Prostate gland (tissue), 2 donors: ENCODE measurements at regions of chr16 and their contacts with region 1.

Region 1: GRCh38 chr16:89700100-89700648 is 1.3 kb downstream of the SPATA2L start:
- DNase-seq: peak; percentile 100
- H3K4me3 ChIP-seq: peak overlapping the region; percentile 60 to 66
- H3K27ac ChIP-seq: peak overlapping the region; percentile 92 to 97
- H3K4me1 ChIP-seq: peaks cover 6% of the 10 kb centered on the region
- H3K27me3 ChIP-seq: no peaks in the 10 kb centered on the region
- CTCF ChIP-seq: peak; percentile 71 to 99 (median 90)
- POLR2A ChIP-seq: peak; percentile 81

Region 2: GRCh38 chr16:88811769-88812512 is 888.2 kb before region 1 on chr16 and contains the start of gene APRT:
- intact Hi-C with region 1: loop called (anchors 5 kb)
- DNase-seq: peak; percentile 90
- H3K4me3 ChIP-seq: peak within 1 kb of the TSS; percentile 60 to 62
- H3K27ac ChIP-seq: peak within 1 kb of the TSS; percentile 83 to 84
- H3K4me1 ChIP-seq: peaks cover 10% of the 10 kb centered on the region
- H3K27me3 ChIP-seq: no peaks in the 10 kb centered on the region
- CTCF ChIP-seq: peak in 3 of 4 experiments; percentile 23 to 62 (median 54)
- POLR2A ChIP-seq: peak; percentile 63
- total RNA-seq, gene APRT: 165 to 211 TPM

Region 3: DNA sequence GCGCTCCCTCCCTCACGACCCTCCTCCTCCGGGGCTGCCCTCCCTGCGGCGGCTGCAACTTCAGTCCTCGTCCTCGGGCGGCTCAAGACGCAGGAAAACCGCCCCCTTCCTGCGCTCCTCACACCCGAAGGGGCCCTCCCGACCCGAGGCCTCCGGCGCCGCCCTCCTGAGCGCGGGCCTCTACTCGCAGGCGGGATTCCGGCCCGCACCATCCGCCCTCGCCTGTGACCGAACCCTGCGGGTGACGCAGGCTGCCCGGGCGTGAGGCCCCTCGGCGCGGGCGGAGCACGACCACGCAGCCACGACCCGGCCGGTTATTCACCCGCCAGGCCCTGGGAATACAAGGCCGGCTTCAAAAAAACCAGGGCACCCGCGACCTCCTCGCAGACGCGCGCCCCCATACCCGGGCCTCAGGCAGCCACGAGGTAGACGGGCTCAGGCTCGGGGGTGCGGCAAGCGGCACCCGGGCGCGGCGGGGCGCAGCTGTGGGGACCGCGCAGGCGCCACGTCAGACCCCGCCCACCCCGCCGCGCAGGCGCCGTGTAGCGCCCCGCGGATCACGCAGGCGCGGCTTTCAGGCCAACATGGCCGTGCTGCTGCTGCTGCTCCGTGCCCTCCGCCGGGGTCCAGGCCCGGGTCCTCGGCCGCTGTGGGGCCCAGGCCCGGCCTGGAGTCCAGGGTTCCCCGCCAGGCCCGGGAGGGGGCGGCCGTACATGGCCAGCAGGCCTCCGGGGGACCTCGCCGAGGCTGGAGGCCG is 192.2 kb before region 1 on chr16 and contains the start of gene SPG7:
- intact Hi-C with region 1: no loop called
- DNase-seq: peak; percentile 77
- H3K4me3 ChIP-seq: peak within 1 kb of the TSS; percentile 85 to 98
- H3K27ac ChIP-seq: peak within 1 kb of the TSS; percentile 86 to 88
- H3K4me1 ChIP-seq: peaks cover 6% of the 10 kb centered on the region
- H3K27me3 ChIP-seq: no peaks in the 10 kb centered on the region
- CTCF ChIP-seq: peak in 1 of 4 experiments; percentile 20
- POLR2A ChIP-seq: peak; percentile 95
- total RNA-seq, gene SPG7: 128 to 165 TPM

Region 4: GRCh38 chr16:89720813-89721545 is 20.8 kb after region 1 on chr16 and contains the starts of genes VPS9D1 and ZNF276:
- intact Hi-C with region 1: loop called (anchors 2 kb)
- DNase-seq: peak; percentile 74
- H3K4me3 ChIP-seq: peak within 1 kb of the TSS; percentile 72 to 97
- H3K27ac ChIP-seq: peak within 1 kb of the TSS; percentile 91 to 98
- H3K4me1 ChIP-seq: peaks cover 17% of the 10 kb centered on the region
- H3K27me3 ChIP-seq: no peaks in the 10 kb centered on the region
- CTCF ChIP-seq: no peak
- POLR2A ChIP-seq: no peak
- total RNA-seq, gene VPS9D1: 8.5 to 16.0 TPM
- total RNA-seq, gene ZNF276: 18.4 to 46.1 TPM

Region 5: DNA sequence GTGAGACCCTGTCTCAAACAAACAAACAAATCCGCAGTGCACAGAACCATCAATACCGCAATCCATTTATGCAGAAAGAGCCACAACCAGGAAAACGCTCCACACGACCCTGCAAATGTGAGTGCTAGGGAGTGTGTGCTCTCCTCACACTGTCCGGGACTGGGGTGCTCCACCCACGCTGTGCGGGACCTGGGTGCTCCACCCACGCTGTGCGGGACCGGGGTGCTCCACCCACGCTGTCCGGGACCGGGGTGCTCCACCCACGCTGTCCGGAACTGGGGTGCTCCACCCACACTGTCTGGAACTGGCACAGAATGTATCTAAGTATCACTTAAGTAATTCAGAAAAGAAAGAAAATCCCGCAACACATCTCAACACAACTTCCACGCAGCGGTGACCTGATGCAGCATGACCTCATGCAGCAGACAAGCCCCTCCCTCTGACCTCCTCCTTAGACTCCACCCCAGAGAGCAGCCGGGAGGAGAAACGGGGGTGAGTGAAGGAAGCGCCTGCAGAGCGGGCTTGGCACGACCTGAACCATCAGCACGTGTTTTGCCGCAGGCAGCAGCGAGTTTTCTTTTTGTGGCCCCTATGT is 59.7 kb after region 1 on chr16:
- intact Hi-C with region 1: no loop called
- DNase-seq: no peak
- H3K4me3 ChIP-seq: no peak overlapping the region
- H3K27ac ChIP-seq: no peak overlapping the region
- H3K4me1 ChIP-seq: no peaks in the 10 kb centered on the region
- H3K27me3 ChIP-seq: no peaks in the 10 kb centered on the region
- CTCF ChIP-seq: no peak
- POLR2A ChIP-seq: no peak

Region 6: GRCh38 chr16:89873972-89874689 is 174.0 kb after region 1 on chr16:
- intact Hi-C with region 1: loop called (anchors 5 kb)
- DNase-seq: peak; percentile 96
- H3K4me3 ChIP-seq: peak overlapping the region; percentile 65 to 88
- H3K27ac ChIP-seq: peak overlapping the region; percentile 97 to 100
- H3K4me1 ChIP-seq: peaks cover 5% of the 10 kb centered on the region
- H3K27me3 ChIP-seq: no peaks in the 10 kb centered on the region
- CTCF ChIP-seq: no peak
- POLR2A ChIP-seq: no peak